ENCODE measurements at regions of chr3 and their contacts with region 1.

Region 1: GRCh38 chr3:114839476-114839875 is 307.6 kb downstream of the ZBTB20 start:
- DNase-seq: no peak
- ATAC-seq: peak in 1 of 2 donors; percentile 49
- H3K4me3 ChIP-seq: no peak overlapping the region
- H3K27ac ChIP-seq: no peak overlapping the region
- H3K4me1 ChIP-seq: peaks cover 0 to 4% of the 10 kb centered on the region in 2 donors
- H3K27me3 ChIP-seq: no peaks in the 10 kb centered on the region
- CTCF ChIP-seq: no peak
- POLR2A ChIP-seq: no peak

Region 2: DNA sequence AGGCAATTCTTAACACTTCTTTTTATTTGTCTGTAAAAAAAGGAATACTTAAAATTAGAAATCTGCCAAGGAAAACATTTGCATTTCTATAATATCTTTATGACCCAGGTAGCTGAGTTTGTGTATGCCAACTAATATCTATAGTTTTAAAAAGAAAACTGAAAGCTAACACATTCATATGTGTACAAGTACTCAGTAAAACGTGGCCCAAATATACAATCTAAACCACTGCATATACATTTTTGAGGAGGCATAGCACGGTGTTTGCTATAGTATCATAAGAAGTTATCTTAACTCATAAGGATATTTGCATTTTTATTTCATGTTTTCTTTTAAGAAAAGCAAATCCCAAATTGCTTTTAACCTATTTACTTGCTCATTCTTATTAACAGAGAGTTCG is 134.9 kb after region 1 on chr3:
- in situ Hi-C with region 1: no loop called
- intact Hi-C with region 1: loop called (anchors 10 kb)
- DNase-seq: no peak
- ATAC-seq: no peak
- H3K4me3 ChIP-seq: no peak overlapping the region
- H3K27ac ChIP-seq: no peak overlapping the region
- H3K4me1 ChIP-seq: no peaks in the 10 kb centered on the region
- H3K27me3 ChIP-seq: no peaks in the 10 kb centered on the region
- CTCF ChIP-seq: no peak
- POLR2A ChIP-seq: no peak

Region 3: DNA sequence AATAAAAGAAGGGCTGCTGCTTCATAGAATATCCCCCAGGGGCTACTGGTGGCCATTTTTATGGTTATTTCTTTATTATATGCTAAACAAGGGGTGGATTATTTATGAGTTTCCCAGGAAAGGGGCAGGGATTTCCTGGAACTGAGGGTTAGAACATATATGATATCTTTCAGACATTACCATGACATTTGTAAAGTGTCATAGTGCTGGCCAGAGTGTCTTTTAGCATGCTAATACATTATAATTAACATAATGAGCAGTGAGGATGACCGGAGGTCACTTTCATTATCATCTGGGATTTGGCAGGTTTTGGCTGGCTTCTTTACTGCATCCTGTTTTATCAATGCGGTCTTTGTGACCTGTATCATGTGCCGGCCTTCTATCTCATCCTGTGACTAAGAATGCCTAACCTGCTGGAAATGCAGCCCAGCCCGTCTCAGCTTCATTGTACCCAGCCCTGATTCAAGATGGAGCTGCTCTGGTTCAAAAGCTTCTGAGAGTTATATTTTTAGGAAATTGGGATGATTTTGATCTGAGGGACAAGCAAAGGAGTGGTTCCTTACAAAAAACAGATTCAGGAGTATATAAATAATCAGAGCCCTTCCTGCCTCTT is 316.7 kb after region 1 on chr3:
- in situ Hi-C with region 1: loop called in 2 of 4 experiments (anchors 10 to 25 kb)
- intact Hi-C with region 1: no loop called
- DNase-seq: no peak
- ATAC-seq: no peak
- H3K4me3 ChIP-seq: no peak overlapping the region
- H3K27ac ChIP-seq: no peak overlapping the region
- H3K4me1 ChIP-seq: no peaks in the 10 kb centered on the region
- H3K27me3 ChIP-seq: no peaks in the 10 kb centered on the region
- CTCF ChIP-seq: no peak
- POLR2A ChIP-seq: no peak